ENCODE measurements at regions of chr11 and their contacts with region 1.

Region 1: DNA sequence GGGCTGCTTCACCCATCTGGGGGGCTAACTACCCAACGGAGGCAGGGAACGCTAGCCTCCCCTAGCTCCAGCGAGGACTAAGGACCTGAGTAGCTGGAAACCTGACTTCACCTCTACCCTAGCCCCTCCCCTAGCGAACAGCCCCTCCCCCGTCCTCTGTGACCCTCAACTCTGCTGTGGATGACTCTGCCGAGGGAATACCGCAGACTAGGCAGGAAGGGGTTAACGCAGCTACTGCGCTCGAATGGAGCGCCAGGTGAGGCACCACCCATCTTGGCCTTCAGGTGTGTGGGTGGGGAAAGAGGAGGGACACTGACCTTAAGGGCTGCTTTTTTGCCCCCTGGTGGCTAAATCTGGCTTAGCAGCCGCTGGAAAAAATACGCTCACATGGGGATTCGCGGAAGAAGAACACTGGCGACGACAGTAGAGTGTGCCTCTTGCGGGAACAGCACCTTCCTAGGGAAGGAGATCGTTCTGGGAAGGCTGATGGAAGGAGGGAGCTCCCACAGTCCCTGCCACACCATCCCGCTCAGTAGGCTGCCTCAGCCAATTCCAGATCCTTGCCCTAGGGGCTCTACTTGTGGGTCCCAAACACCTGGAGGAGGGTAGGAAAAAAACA is 4.5 kb upstream of the BCL9L start:
- DNase-seq: peak; percentile 93
- ATAC-seq: peak; percentile 66

Region 2: DNA sequence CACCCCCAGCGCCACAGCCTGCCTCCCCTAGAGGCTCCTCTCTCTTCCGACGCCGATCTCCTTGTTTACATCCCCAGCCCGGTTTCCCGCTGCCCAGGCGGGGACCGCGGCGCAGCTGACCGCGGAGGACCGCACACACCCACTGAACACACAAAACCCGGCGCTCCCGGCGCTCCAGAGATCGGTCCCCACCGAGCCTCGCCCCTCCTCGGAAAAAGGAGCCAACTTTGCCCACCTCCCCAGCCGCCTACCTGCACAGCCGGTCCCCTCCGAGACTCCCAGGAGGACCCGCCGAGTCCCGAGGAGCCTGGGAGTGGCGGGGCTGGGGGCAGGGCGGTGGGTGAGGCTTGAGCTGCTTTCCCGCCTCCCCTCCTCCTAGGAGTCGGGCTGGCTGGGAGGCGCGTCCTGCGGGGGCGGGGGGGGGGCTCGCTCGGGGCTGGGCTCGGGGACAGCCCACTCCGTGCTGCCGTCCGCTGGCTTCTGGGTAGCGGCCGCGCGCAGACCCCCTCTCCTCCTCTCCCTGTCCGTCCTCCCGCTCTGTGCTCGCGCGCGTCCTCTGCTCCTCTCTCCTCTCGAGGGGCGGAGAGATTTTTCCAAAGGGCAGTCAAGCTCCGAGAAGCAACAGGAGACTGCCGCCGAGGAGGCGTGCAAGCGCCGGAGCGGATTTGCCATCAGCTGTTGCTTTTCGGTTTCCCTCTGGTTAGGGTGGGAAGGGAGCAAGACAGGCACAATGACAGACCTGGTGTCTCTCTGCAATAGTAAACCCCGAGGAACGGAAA is 1053.7 kb before region 1 on chr11 and contains the start of gene FXYD6:
- intact Hi-C with region 1: no loop called
- DNase-seq: peak in 1 of 2 donors; percentile 42
- ATAC-seq: peak; percentile 46
- total RNA-seq, gene FXYD6: 4.4 to 37.2 TPM

Region 3: DNA sequence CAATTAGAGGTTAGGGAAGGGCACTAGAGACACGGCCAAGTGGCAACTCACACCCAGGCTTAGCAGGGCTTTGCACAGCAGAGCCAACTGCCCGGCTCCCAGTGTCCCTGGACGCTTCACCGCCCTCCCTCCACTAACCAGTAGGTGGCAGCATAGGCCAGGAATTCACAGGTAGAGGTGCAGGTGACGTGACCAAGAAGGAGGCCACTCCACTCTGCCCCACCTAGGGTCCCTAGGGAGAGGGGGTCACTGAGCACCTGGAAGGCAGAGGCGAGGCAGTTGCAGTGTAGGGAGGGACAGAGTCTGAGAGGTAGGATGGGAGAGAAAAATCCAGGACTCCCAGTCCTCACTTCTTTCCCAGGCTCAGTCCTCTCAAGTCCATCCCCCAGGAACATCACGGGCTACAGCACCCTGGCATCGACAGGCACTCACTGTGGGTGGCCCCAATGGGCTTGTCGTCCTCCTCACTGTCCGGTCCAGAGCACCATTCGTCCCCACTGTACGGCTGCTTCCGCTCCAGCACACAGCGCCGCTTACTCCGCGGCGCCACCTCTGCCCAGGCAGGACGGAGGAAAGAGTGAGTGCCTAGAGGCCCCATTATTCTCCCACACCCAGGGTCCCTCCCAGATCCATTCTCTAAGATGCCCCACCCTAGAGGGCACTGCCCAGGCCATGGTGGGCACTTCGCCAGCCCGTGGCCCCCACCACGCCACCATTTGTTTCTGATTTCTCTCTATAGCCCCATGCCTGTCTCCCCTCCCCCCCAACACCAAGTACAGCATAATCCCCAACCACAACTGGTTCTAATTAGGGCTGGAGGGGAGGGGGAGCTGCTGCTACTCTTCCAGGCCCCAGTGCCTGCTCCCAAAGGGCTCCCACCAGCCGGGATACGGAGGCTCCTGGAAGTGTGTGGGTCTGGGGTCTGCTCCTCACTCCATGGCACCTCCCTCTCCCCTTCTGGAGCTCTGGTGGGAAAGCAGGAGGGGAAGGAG is 22.9 kb before region 1 on chr11:
- intact Hi-C with region 1: loop called (anchors 2 to 5 kb)
- DNase-seq: peak; percentile 82 to 89
- ATAC-seq: peak; percentile 74

Region 4: GRCh38 chr11:119222308-119222707 is 292.1 kb after region 1 on chr11:
- intact Hi-C with region 1: no loop called
- DNase-seq: no peak
- ATAC-seq: peak; percentile 57

Measured in left colon (tissue), 2 donors.